ENCODE measurements at regions of chr3 and their contacts with region 1.

Region 1: GRCh38 chr3:196227629-196228493 is 11.5 kb downstream of the SLC51A start:
- DNase-seq: peak; percentile 43
- ATAC-seq: peak; percentile 89
- H3K4me3 ChIP-seq: peak overlapping the region in 1 of 3 experiments; percentile 35; a peak in 1 of 6 replicates
- H3K27ac ChIP-seq: peak overlapping the region; percentile 47
- H3K4me1 ChIP-seq: peaks cover 40% of the 10 kb centered on the region
- H3K27me3 ChIP-seq: no peaks in the 10 kb centered on the region
- CTCF ChIP-seq: peak; percentile 32; the same call in 1 of the 2 replicates
- EP300 ChIP-seq: peak in 1 of 2 experiments; percentile 18; a peak in 2 of 4 replicates
- POLR2A ChIP-seq: peak in 1 of 2 experiments; percentile 39; a peak in 1 of 4 replicates
- RAD21 ChIP-seq: no peak

Region 2: GRCh38 chr3:195932456-195933430 is 295.1 kb before region 1 on chr3:
- CTCF ChIA-PET with region 1: no interaction called
- POLR2A ChIA-PET with region 1: no interaction called
- in situ Hi-C with region 1: no loop called
- intact Hi-C with region 1: no loop called
- DNase-seq: peak; percentile 11
- ATAC-seq: peak; percentile 27
- H3K4me3 ChIP-seq: no peak overlapping the region
- H3K27ac ChIP-seq: no peak overlapping the region
- H3K4me1 ChIP-seq: peaks cover 31% of the 10 kb centered on the region
- H3K27me3 ChIP-seq: no peaks in the 10 kb centered on the region
- CTCF ChIP-seq: no peak
- EP300 ChIP-seq: no peak
- POLR2A ChIP-seq: no peak
- RAD21 ChIP-seq: no peak

Region 3: DNA sequence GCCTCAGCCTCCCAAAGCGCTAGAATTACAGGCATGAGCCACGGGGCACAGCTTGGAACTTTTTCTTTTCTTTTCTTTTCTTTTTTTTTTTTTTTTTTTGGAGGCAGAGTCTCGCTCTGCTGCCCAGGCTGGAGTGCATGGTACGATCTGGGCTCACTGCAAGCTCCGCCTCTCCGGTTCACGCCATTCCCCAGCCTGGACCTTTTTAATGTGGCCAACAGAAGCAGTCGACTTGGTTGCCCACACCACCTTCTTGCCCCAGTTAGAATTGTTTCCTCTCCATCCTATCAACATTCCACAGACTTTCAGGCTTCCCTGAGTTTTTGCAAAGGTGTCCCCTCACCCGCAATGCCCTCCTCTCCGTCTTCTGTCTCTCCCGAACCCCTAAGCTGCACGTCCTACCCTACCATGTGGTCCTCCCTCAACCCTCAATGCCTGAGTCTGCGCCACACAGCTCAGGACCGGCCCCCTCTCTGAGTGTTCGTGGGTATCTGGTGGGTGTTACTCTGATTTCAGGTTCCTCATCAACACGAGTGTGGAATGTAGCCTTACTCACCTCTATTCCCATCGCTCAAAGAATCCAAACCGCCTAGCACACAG is 21.2 kb before region 1 on chr3:
- CTCF ChIA-PET with region 1: no interaction called
- POLR2A ChIA-PET with region 1: no interaction called
- in situ Hi-C with region 1: no loop called
- intact Hi-C with region 1: loop called (anchors 1 kb)
- DNase-seq: no peak
- ATAC-seq: no peak
- H3K4me3 ChIP-seq: no peak overlapping the region
- H3K27ac ChIP-seq: no peak overlapping the region
- H3K4me1 ChIP-seq: peaks cover 67% of the 10 kb centered on the region
- H3K27me3 ChIP-seq: peaks cover 3 to 7% of the 10 kb centered on the region in 2 experiments; a peak in 2 of 5 replicates
- CTCF ChIP-seq: no peak
- EP300 ChIP-seq: no peak
- POLR2A ChIP-seq: no peak
- RAD21 ChIP-seq: no peak

Region 4: DNA sequence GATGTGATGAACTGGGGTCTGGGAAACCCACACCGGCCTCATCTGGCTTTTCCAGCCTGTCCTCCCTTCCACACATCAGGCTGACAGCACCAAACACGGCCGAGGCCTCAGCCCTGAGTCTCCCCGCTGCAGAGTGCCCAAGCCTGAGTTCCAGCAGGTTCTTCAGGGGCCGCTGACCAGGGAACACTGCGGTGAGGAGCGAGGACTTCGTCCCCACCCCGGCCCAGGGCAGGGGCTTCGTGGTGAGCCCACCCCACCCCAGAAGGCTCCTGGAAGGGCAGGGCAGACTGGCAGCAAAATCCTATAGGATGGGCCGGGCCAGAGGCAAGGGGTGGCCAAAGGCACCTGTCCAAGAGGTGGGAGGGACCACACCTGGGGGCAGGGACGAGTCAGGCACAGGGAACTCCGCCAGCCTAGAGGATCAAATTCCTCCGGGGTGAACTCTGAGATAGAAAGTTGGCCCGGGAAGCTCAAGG is 11.7 kb before region 1 on chr3 and contains the start of gene SLC51A:
- CTCF ChIA-PET with region 1: no interaction called
- POLR2A ChIA-PET with region 1: interaction called, 13 read pairs
- in situ Hi-C with region 1: no loop called
- intact Hi-C with region 1: no loop called
- DNase-seq: no peak
- ATAC-seq: peak; percentile 59
- H3K4me3 ChIP-seq: peak within 1 kb of the TSS; percentile 55 to 79 (median 63)
- H3K27ac ChIP-seq: peak within 1 kb of the TSS; percentile 71
- H3K4me1 ChIP-seq: peaks cover 88% of the 10 kb centered on the region
- H3K27me3 ChIP-seq: no peaks in the 10 kb centered on the region; a peak in 1 of 5 replicates
- CTCF ChIP-seq: no peak
- EP300 ChIP-seq: no peak
- POLR2A ChIP-seq: no peak; a peak in 1 of 4 replicates
- RAD21 ChIP-seq: no peak
- total RNA-seq, gene SLC51A: 3.8 and 4.3 TPM in 2 replicates

Measured in HepG2 (cell line).